B cell (primary cell): ENCODE measurements at regions of chr9 and their contacts with region 1.

Region 1: DNA sequence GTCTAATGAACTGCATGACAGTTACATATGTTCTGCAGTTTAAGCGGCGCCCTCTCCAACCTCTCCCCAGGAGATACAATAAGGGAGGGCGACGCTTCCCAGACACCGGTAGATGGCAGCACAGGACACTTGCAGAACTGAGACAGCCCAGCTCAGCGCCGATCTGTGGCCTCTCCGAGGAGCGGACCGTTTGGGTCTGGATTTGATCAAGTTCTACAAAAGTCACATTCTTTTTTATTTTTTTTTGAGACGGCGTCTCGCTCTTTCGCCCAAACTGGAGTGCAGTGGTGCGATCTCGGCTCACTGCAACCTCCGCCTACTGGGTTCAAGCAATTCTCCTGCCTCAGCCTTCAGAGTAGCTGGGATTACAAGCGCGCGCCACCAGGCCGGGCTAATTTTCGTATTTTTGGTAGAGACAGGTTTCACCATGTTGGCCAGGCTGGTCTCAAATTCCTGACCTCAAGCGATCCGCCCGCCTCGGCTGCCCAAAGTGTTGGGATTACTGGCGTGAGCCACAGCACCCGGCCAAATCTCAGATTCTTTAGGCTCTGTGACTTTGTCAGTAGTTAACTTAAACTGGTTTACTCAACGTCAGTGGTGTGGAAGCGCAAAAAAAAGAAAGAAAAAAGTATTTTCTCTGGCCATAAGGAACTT is 1.4 kb upstream of the ATOSB start:
- DNase-seq: peak; percentile 93
- ATAC-seq: peak; percentile 54
- H3K4me3 ChIP-seq: peak overlapping the region; percentile 55 to 72 (median 59)
- H3K4me3 Mint-ChIP-seq: peak overlapping the region; percentile 98
- H3K27ac ChIP-seq: peak overlapping the region in 1 of 2 donors; percentile 93
- H3K27ac Mint-ChIP-seq: peak overlapping the region; percentile 97
- H3K4me1 ChIP-seq: peaks cover 30 to 37% of the 10 kb centered on the region in 2 donors
- H3K4me1 Mint-ChIP-seq: peaks cover 40% of the 10 kb centered on the region
- H3K27me3 ChIP-seq: no peaks in the 10 kb centered on the region
- H3K27me3 Mint-ChIP-seq: peaks cover 3% of the 10 kb centered on the region
- CTCF ChIP-seq: peak; percentile 94

Region 2: GRCh38 chr9:34072868-34073590 is 1044.0 kb before region 1 on chr9:
- CTCF ChIA-PET with region 1: no interaction called
- POLR2A ChIA-PET with region 1: no interaction called
- intact Hi-C with region 1: no loop called
- DNase-seq: no peak
- ATAC-seq: no peak
- H3K4me3 ChIP-seq: no peak overlapping the region
- H3K4me3 Mint-ChIP-seq: no peak overlapping the region
- H3K27ac ChIP-seq: no peak overlapping the region
- H3K27ac Mint-ChIP-seq: no peak overlapping the region
- H3K4me1 ChIP-seq: no peaks in the 10 kb centered on the region
- H3K4me1 Mint-ChIP-seq: no peaks in the 10 kb centered on the region
- H3K27me3 ChIP-seq: peaks cover 0 to 8% (median 3%) of the 10 kb centered on the region in 4 experiments
- H3K27me3 Mint-ChIP-seq: peaks cover 17% of the 10 kb centered on the region
- CTCF ChIP-seq: no peak

Region 3: DNA sequence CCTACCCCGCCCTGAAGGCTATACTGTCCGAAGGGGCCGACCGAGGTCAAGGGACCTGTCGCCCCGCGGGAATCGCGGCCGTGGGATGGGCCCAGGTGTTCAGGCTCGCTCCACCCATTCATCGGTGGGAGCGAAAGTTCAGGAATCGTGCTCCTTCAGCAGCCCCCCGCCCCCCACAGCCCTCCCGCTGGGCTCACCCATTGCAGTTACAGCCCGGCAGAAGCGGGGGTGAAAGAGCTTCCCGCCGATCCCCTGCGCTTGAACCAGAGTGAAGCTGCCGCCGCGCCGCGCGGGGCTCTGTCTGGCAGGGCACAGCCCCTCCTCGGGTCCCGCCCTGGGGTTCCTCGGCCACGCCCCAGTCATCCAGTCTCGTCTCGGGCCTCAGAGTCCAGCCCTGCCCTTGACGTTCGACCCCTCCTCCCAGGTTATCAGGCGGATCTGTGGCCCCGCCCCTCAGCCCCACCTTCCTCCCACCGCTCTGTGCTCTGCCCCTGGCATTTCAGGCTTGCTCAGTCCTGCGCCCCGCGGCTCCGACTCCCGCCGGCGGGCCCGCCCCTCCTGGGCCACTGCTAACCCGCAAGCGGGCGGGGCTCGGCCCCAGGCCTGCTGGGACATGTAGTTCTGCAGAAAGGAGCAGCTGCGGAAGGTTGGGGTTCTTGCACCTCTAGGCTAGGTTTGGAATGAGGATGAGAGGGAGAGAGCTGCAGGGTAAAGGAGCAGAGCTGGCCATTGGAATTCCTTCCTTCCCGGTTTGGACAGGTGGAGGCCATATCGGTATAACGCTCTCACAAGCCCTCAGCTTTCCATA is 740.2 kb before region 1 on chr9 and contains the start of gene MYORG:
- CTCF ChIA-PET with region 1: interaction called, 3 read pairs
- POLR2A ChIA-PET with region 1: no interaction called
- intact Hi-C with region 1: loop called (anchors 5 kb)
- DNase-seq: peak; percentile 97
- ATAC-seq: peak; percentile 85
- H3K4me3 ChIP-seq: peak within 1 kb of the TSS; percentile 69 to 85 (median 80)
- H3K4me3 Mint-ChIP-seq: peak within 1 kb of the TSS; percentile 98
- H3K27ac ChIP-seq: no peak within 1 kb of the TSS
- H3K27ac Mint-ChIP-seq: peak within 1 kb of the TSS; percentile 91
- H3K4me1 ChIP-seq: peaks cover 29 to 43% of the 10 kb centered on the region in 2 donors
- H3K4me1 Mint-ChIP-seq: peaks cover 39% of the 10 kb centered on the region
- H3K27me3 ChIP-seq: peaks cover 0 to 15% (median 4%) of the 10 kb centered on the region in 4 experiments
- H3K27me3 Mint-ChIP-seq: no peaks in the 10 kb centered on the region
- CTCF ChIP-seq: peak; percentile 29
- total RNA-seq, gene MYORG: 0.37 and 0.49 TPM in 2 replicates

Region 4: GRCh38 chr9:35071814-35072460 is 45.1 kb before region 1 on chr9:
- CTCF ChIA-PET with region 1: interaction called, 7 read pairs
- POLR2A ChIA-PET with region 1: interaction called, 13 read pairs
- intact Hi-C with region 1: loop called (anchors 1 kb)
- DNase-seq: peak; percentile 89
- ATAC-seq: peak; percentile 64
- H3K4me3 ChIP-seq: peak overlapping the region; percentile 73 to 96 (median 86)
- H3K4me3 Mint-ChIP-seq: peak overlapping the region; percentile 89
- H3K27ac ChIP-seq: peak overlapping the region; percentile 84 to 97
- H3K27ac Mint-ChIP-seq: peak overlapping the region; percentile 90
- H3K4me1 ChIP-seq: peaks cover 40 to 45% of the 10 kb centered on the region in 2 donors
- H3K4me1 Mint-ChIP-seq: peaks cover 49% of the 10 kb centered on the region
- H3K27me3 ChIP-seq: no peaks in the 10 kb centered on the region
- H3K27me3 Mint-ChIP-seq: no peaks in the 10 kb centered on the region
- CTCF ChIP-seq: peak; percentile 52

Region 5: DNA sequence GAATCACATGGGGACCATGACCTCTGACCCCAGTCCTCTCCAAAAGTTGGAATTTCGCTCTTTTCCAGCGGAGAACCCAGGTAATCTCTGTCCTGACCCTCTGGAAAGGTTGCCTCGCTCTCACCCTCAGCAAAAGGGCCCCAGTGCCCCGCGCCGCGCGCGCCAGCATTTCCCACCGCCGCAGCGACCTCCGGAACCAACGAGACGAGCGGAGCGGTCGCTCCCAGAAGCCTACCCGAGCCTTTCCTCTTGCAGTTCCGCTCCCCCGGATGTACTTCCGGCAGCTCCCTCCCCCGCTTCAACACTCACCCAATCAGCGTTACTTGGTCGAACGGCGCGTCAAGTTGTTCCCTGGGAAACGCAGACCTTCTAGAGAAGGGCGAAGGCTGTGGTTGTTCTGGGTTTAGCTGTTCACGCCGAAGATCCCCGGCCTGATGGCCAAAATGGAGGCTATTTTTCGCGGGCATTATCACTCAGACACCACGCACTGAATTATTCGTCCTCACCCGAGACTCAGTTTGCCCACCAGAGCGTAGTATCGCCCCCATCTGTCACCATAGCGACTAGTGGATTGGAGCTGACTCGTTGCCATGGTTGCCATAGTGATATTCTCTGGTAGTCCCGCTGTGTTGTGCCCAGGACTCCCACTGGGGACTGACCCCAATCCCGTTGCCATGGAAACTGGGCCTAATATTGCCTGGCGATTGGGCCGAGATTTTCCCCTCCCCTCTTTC is 13.9 kb before region 1 on chr9 and contains the start of gene STOML2:
- CTCF ChIA-PET with region 1: interaction called, 18 read pairs
- POLR2A ChIA-PET with region 1: interaction called, 9 read pairs
- intact Hi-C with region 1: loop called (anchors 1 kb)
- DNase-seq: peak; percentile 95
- ATAC-seq: peak; percentile 95
- H3K4me3 ChIP-seq: peak within 1 kb of the TSS; percentile 61 to 94 (median 88)
- H3K4me3 Mint-ChIP-seq: peak within 1 kb of the TSS; percentile 86
- H3K27ac ChIP-seq: peak within 1 kb of the TSS; percentile 86 to 96
- H3K27ac Mint-ChIP-seq: peak within 1 kb of the TSS; percentile 97
- H3K4me1 ChIP-seq: peaks cover 13 to 22% of the 10 kb centered on the region in 2 donors
- H3K4me1 Mint-ChIP-seq: peaks cover 28% of the 10 kb centered on the region
- H3K27me3 ChIP-seq: no peaks in the 10 kb centered on the region
- H3K27me3 Mint-ChIP-seq: no peaks in the 10 kb centered on the region
- CTCF ChIP-seq: no peak
- total RNA-seq, gene STOML2: 52.1 and 58.9 TPM in 2 replicates

Region 6: GRCh38 chr9:35476596-35476995 is 359.6 kb after region 1 on chr9:
- CTCF ChIA-PET with region 1: interaction called, 42 read pairs
- POLR2A ChIA-PET with region 1: no interaction called
- intact Hi-C with region 1: no loop called
- DNase-seq: no peak
- ATAC-seq: no peak
- H3K4me3 ChIP-seq: no peak overlapping the region
- H3K4me3 Mint-ChIP-seq: no peak overlapping the region
- H3K27ac ChIP-seq: no peak overlapping the region
- H3K27ac Mint-ChIP-seq: no peak overlapping the region
- H3K4me1 ChIP-seq: no peaks in the 10 kb centered on the region
- H3K4me1 Mint-ChIP-seq: no peaks in the 10 kb centered on the region
- H3K27me3 ChIP-seq: peaks cover 0 to 21% (median 0%) of the 10 kb centered on the region in 4 experiments
- H3K27me3 Mint-ChIP-seq: peaks cover 23% of the 10 kb centered on the region
- CTCF ChIP-seq: no peak

Region 7: GRCh38 chr9:35646533-35647265 is 529.7 kb after region 1 on chr9:
- CTCF ChIA-PET with region 1: interaction called, 3 read pairs
- POLR2A ChIA-PET with region 1: interaction called, 15 read pairs
- intact Hi-C with region 1: no loop called
- DNase-seq: peak; percentile 95
- ATAC-seq: peak; percentile 89
- H3K4me3 ChIP-seq: peak overlapping the region; percentile 76 to 90 (median 84)
- H3K4me3 Mint-ChIP-seq: peak overlapping the region; percentile 97
- H3K27ac ChIP-seq: peak overlapping the region; percentile 88 to 95
- H3K27ac Mint-ChIP-seq: peak overlapping the region; percentile 97
- H3K4me1 ChIP-seq: peaks cover 76 to 92% of the 10 kb centered on the region in 2 donors
- H3K4me1 Mint-ChIP-seq: peaks cover 81% of the 10 kb centered on the region
- H3K27me3 ChIP-seq: no peaks in the 10 kb centered on the region
- H3K27me3 Mint-ChIP-seq: no peaks in the 10 kb centered on the region
- CTCF ChIP-seq: peak; percentile 94

Region 8: DNA sequence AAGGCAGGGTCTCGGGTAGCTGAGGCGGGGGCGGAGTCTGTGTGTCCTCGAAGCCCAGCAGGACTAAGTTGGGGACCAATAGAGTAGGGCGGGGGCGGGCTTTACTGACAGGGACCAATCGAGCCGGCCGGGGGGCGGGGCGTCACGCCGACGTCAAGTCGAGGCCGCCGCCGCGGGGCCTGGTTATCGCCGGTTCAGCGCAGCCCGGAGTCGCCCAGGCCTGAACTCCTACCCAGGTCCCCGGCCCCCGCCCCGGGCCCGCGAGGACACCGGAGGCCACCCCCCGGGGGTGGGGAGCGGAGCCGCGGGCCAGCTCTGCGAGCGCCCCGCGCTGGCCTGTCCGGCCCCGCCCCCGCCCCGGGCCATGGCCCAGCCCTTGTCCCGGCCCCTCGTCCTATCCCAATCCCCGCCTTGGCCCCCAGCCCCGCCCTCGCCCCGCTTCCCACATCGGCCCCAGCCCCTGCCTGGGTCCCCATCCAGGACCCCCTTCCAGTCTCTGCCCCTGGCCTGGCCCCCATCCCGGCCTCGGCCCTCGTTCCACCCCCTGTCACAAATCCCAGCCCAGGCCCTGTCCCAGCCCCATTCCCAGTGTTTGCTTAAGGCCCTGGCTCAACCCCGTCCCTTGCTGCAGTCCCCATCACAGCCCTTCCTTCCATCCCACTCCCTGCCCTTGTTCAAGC is 712.2 kb after region 1 on chr9 and contains the start of gene TMEM8B:
- CTCF ChIA-PET with region 1: no interaction called
- POLR2A ChIA-PET with region 1: no interaction called
- intact Hi-C with region 1: loop called (anchors 5 kb)
- DNase-seq: peak; percentile 94
- ATAC-seq: peak; percentile 92
- H3K4me3 ChIP-seq: peak within 1 kb of the TSS; percentile 32 to 80 (median 78)
- H3K4me3 Mint-ChIP-seq: peak within 1 kb of the TSS; percentile 96
- H3K27ac ChIP-seq: peak within 1 kb of the TSS; percentile 60 to 78
- H3K27ac Mint-ChIP-seq: peak within 1 kb of the TSS; percentile 89
- H3K4me1 ChIP-seq: peaks cover 24 to 35% of the 10 kb centered on the region in 2 donors
- H3K4me1 Mint-ChIP-seq: peaks cover 44% of the 10 kb centered on the region
- H3K27me3 ChIP-seq: no peaks in the 10 kb centered on the region
- H3K27me3 Mint-ChIP-seq: no peaks in the 10 kb centered on the region
- CTCF ChIP-seq: no peak
- total RNA-seq, gene TMEM8B: 13.6 and 14.5 TPM in 2 replicates